GM12878 (cell line): ENCODE measurements at regions of chr7 and their contacts with region 1.

Region 1: DNA sequence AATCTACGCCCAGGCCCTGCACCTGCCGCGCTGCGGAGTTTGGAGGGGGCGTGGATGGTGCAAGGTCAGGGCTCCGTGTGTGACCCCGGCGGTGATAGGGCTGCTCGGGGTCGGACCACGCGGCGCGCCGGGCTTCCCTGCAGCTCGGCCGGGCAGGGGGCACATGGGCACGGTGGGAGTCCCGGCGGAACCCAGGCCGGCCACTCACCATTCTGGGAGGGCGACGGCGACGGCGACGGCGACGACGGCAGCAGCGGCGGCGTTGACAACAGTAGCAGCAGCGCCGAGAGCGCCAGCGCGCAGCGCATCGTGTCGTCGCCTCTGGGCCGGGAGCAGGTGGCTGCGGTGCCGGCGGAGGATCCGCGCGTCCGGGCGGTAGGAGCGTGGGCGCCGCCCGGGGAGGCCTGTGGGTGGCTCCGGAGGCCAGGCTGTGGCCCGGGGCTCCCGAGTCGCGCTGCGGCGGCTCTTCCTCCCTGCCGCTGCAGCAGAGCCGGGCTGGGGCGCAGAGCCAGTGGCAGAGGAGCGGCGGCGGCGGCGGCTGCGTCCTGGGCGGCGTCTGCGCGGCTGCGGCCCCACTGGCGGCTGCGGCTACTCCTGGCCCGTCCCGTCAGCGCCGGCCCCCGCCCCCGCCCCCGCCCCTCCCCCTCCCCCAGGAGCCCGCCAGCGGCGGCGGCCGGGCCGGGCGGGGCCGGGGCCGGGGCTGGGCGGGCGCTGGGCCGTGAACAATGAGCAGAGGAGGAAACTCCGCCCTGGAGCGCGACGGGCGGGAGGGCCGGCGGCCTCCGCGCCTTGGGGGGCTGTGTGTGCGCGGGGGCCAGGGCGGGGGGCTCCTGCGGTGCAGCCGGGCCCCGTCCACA is at the start of gene PODXL:
- DNase-seq: no peak
- ATAC-seq: peak; percentile 90
- H3K4me3 ChIP-seq: peak within 1 kb of the TSS; percentile 57; the same call in 1 of the 2 replicates
- H3K27ac ChIP-seq: no peak within 1 kb of the TSS
- H3K4me1 ChIP-seq: peaks cover 10% of the 10 kb centered on the region
- H3K27me3 ChIP-seq: peaks cover 8 to 36% of the 10 kb centered on the region in 2 experiments
- CTCF ChIP-seq: no peak
- EP300 ChIP-seq: no peak
- POLR2A ChIP-seq: no peak; the same call in 1 of the 2 replicates
- RAD21 ChIP-seq: no peak
- polyA plus RNA-seq, gene PODXL: 0.04 to 0.06 TPM

Region 2: DNA sequence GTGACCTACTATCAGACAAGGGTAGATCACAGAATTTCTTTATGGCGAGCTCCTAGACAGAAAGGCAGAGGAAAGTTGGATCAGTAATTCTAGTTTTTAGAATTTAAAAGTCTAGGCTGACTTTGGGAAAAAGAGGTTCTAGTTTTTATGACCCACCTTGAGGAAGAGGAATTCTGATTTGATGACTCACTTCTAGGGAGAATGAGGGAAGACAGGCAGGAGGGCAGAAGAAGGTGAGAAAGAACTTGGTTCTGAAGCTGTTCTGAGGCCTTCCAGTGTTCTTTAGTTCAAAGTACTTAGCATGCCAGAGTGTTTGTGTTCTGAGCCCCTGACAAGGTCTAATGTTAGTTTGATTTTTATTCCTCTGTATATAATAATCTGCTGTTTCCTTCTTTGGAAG is 97.0 kb before region 1 on chr7:
- CTCF ChIA-PET with region 1: no interaction called
- POLR2A ChIA-PET with region 1: interaction called, 12 read pairs
- RAD21 ChIA-PET with region 1: no interaction called
- SMC1A ChIA-PET with region 1: no interaction called
- in situ Hi-C with region 1: no loop called
- intact Hi-C with region 1: no loop called
- DNase-seq: no peak
- ATAC-seq: no peak
- H3K4me3 ChIP-seq: no peak overlapping the region
- H3K27ac ChIP-seq: no peak overlapping the region
- H3K4me1 ChIP-seq: no peaks in the 10 kb centered on the region
- H3K27me3 ChIP-seq: no peaks in the 10 kb centered on the region
- CTCF ChIP-seq: no peak
- EP300 ChIP-seq: no peak
- POLR2A ChIP-seq: no peak
- RAD21 ChIP-seq: no peak

Region 3: DNA sequence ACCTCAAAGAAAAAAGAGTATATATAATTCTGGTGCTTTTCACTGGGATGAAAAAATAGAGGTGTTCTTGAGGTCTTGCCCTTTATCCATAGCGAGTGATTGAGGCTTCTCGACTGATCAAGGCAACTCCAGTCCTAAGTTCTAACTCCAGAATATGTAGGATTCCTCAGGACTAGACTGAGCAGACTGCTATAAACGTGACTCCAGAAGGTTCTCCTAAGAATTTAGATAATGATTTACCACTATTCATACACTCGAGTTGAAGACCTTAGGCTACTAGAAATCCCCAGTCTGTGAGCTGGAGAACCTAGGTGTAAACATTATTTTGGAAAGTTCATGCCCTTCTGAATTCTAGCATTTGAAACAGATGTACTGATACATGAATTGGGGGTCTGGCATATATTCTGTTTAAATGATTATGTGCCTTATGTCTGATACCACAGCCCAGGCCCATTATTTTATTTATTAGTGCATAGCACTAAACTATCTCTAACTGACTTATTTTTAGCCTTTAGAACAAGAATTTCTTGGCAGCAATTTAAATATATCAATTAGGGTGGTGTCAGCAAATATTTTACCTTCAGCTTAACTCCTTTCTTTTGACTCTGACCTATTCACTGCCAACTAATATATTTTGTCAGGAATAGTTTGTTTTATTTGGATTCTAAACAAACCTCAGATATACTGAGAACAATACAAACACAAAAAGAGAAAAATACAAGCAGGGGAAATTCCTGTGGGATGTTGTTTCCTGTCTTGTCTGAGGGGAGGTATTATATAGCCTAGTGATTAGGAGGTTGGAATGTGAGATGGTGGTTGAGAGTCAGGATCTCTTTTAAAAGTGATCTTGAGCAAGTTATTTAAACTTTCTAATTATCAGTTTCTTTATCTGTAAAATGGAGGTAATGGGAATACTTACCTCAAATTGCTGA is 75.6 kb before region 1 on chr7:
- CTCF ChIA-PET with region 1: no interaction called
- POLR2A ChIA-PET with region 1: no interaction called
- RAD21 ChIA-PET with region 1: no interaction called
- SMC1A ChIA-PET with region 1: no interaction called
- in situ Hi-C with region 1: no loop called
- intact Hi-C with region 1: no loop called
- DNase-seq: no peak
- ATAC-seq: no peak
- H3K4me3 ChIP-seq: no peak overlapping the region
- H3K27ac ChIP-seq: no peak overlapping the region
- H3K4me1 ChIP-seq: peaks cover 18% of the 10 kb centered on the region
- H3K27me3 ChIP-seq: no peaks in the 10 kb centered on the region
- CTCF ChIP-seq: no peak
- EP300 ChIP-seq: no peak
- POLR2A ChIP-seq: no peak
- RAD21 ChIP-seq: no peak

Region 4: DNA sequence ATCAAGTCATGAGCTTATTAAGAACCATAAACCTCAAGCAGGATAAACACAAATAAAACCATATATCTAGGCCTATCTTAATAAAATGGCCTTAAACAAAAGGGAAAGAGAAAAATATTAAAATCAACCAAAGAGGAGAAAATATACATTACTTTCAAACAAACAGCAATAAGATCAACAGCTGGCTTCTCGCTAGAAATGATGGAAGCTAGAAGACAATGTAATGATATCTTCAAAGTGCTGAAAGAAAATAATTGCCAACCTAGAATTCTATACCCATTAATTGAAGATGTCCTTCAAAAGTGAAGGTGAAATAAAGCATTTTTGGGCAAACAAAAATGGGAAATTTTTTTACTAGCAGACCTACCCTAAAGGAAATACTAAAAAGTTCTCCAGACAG is 143.0 kb after region 1 on chr7:
- CTCF ChIA-PET with region 1: no interaction called
- POLR2A ChIA-PET with region 1: no interaction called
- RAD21 ChIA-PET with region 1: no interaction called
- SMC1A ChIA-PET with region 1: no interaction called
- in situ Hi-C with region 1: no loop called
- intact Hi-C with region 1: no loop called
- DNase-seq: no peak
- ATAC-seq: no peak
- H3K4me3 ChIP-seq: no peak overlapping the region
- H3K27ac ChIP-seq: no peak overlapping the region
- H3K4me1 ChIP-seq: no peaks in the 10 kb centered on the region
- H3K27me3 ChIP-seq: no peaks in the 10 kb centered on the region; a peak in 1 of 4 replicates
- CTCF ChIP-seq: no peak
- EP300 ChIP-seq: no peak
- POLR2A ChIP-seq: no peak
- RAD21 ChIP-seq: no peak

Region 5: GRCh38 chr7:131735101-131735500 is 178.8 kb after region 1 on chr7:
- CTCF ChIA-PET with region 1: no interaction called
- POLR2A ChIA-PET with region 1: no interaction called
- RAD21 ChIA-PET with region 1: no interaction called
- SMC1A ChIA-PET with region 1: no interaction called
- in situ Hi-C with region 1: no loop called
- intact Hi-C with region 1: no loop called
- DNase-seq: no peak
- ATAC-seq: no peak
- H3K4me3 ChIP-seq: no peak overlapping the region
- H3K27ac ChIP-seq: no peak overlapping the region
- H3K4me1 ChIP-seq: no peaks in the 10 kb centered on the region
- H3K27me3 ChIP-seq: no peaks in the 10 kb centered on the region; a peak in 2 of 4 replicates
- CTCF ChIP-seq: no peak
- EP300 ChIP-seq: no peak
- POLR2A ChIP-seq: no peak
- RAD21 ChIP-seq: no peak